ENCODE measurements at regions of chr3 and their contacts with region 1.

Region 1: GRCh38 chr3:194573691-194574437 is 59.4 kb downstream of the TMEM44 start:
- DNase-seq: peak; percentile 68
- ATAC-seq: peak; percentile 27; the same call in 1 of the 2 replicates
- H3K4me3 ChIP-seq: no peak overlapping the region
- H3K27ac ChIP-seq: peak overlapping the region; percentile 25
- H3K4me1 ChIP-seq: peaks cover 32% of the 10 kb centered on the region
- H3K27me3 ChIP-seq: no peaks in the 10 kb centered on the region
- CTCF ChIP-seq: peak; percentile 47; the same call in 1 of the 2 replicates
- POLR2A ChIP-seq: peak; percentile 73
- RAD21 ChIP-seq: peak; percentile 67

Region 2: DNA sequence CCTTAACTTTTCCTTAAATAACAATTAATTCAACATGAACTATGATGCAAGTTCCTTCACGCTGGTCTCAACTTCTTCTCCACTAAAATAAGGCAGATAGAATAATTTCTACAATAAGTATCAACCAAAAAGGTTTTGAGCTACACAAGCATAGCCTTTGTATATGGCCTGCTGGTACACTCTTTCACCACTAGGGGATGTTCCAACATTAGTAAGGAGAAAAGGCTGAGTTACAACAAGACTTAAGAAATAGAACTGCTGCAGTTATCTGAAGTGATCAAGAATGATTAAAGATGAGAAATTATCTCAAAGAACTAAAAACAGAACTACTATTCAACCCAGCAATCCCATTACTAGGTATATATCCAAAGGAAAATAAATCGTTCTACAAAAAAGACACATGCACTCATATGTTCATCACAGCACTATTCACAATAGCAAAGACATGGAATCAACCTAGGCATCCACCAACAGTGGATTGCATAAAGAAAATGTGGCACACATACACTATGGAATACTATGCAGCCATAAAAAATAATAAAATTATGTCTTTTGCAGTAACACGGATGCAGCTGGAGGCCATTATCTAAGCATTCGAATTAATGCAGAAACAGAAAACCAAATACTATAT is 101.5 kb before region 1 on chr3:
- CTCF ChIA-PET with region 1: interaction called, 10 read pairs
- POLR2A ChIA-PET with region 1: interaction called, 11 read pairs
- dilution Hi-C with region 1: no loop called
- in situ Hi-C with region 1: no loop called
- intact Hi-C with region 1: loop called (anchors 1 kb)
- DNase-seq: peak; percentile 82
- ATAC-seq: peak; percentile 80
- H3K4me3 ChIP-seq: no peak overlapping the region
- H3K27ac ChIP-seq: no peak overlapping the region
- H3K4me1 ChIP-seq: peaks cover 26% of the 10 kb centered on the region
- H3K27me3 ChIP-seq: no peaks in the 10 kb centered on the region
- CTCF ChIP-seq: peak; percentile 97
- POLR2A ChIP-seq: 0 out of 2 replicates have a peak, but pooled peaks have one; percentile 34
- RAD21 ChIP-seq: peak; percentile 92

Region 3: GRCh38 chr3:194486540-194487288 is 87.2 kb before region 1 on chr3 and contains the start of gene ATP13A3:
- CTCF ChIA-PET with region 1: interaction called, 3 read pairs
- POLR2A ChIA-PET with region 1: interaction called, 6 read pairs
- dilution Hi-C with region 1: no loop called
- in situ Hi-C with region 1: no loop called
- intact Hi-C with region 1: loop called (anchors 2 kb)
- DNase-seq: peak; percentile 88
- ATAC-seq: peak; percentile 81
- H3K4me3 ChIP-seq: peak within 1 kb of the TSS; percentile 82
- H3K27ac ChIP-seq: peak within 1 kb of the TSS; percentile 93
- H3K4me1 ChIP-seq: peaks cover 21% of the 10 kb centered on the region
- H3K27me3 ChIP-seq: no peaks in the 10 kb centered on the region
- CTCF ChIP-seq: no peak
- POLR2A ChIP-seq: peak; percentile 77
- RAD21 ChIP-seq: no peak
- total RNA-seq, gene ATP13A3: 154 and 284 TPM in 2 replicates